MCF 10A (cell line): ENCODE measurements at regions of chr1 and their contacts with region 1.

Region 1: DNA sequence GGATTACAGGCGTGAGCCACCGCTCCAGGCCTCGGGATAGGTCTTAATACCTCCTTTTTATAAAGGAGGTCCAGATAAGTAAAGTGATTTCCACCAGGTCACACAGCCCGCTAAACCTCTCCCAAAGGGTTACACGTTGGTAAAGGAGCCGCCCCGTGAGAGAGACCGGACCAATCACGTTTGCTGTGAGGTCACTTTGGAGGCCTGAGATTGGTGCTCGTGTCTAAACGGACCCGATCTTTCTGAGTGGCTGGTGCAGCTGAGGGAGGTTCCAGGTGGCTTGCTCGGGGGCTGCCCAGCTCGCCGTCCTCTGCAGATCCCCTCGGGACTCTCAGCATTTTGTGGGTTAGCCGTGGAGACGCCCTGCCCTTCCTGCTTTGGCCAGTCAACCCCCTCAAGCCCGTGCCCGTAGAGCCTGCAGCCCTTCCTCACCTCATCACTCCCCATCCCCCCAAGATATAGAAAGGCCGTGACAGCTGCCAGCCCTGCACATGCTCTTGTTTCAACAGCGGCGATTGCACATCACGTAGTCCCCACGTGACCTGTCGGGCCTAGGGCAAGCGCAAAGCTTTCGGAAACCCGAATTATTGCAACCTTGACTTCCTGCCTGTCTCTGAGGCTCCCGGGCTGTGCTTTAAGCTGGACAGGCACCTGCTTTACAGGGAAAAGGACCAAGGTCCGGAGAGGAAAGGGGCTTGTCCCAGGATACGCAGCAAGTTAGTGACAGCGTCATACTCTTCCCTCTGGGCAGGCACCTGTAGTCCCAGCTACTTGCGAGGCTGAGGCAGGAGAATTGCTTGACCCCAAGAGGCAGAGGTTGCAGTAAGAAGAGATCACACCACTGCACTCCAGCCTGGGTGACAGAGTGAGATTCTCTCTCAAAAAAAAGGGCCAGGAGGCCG is 5.0 kb upstream of the COA7 start:
- DNase-seq: peak; percentile 97
- H3K4me3 Mint-ChIP-seq: peak overlapping the region; percentile 89
- H3K27ac Mint-ChIP-seq: peak overlapping the region; percentile 93
- H3K4me1 Mint-ChIP-seq: peaks cover 26% of the 10 kb centered on the region
- H3K27me3 Mint-ChIP-seq: no peaks in the 10 kb centered on the region
- CTCF ChIP-seq: no peak

Region 2: DNA sequence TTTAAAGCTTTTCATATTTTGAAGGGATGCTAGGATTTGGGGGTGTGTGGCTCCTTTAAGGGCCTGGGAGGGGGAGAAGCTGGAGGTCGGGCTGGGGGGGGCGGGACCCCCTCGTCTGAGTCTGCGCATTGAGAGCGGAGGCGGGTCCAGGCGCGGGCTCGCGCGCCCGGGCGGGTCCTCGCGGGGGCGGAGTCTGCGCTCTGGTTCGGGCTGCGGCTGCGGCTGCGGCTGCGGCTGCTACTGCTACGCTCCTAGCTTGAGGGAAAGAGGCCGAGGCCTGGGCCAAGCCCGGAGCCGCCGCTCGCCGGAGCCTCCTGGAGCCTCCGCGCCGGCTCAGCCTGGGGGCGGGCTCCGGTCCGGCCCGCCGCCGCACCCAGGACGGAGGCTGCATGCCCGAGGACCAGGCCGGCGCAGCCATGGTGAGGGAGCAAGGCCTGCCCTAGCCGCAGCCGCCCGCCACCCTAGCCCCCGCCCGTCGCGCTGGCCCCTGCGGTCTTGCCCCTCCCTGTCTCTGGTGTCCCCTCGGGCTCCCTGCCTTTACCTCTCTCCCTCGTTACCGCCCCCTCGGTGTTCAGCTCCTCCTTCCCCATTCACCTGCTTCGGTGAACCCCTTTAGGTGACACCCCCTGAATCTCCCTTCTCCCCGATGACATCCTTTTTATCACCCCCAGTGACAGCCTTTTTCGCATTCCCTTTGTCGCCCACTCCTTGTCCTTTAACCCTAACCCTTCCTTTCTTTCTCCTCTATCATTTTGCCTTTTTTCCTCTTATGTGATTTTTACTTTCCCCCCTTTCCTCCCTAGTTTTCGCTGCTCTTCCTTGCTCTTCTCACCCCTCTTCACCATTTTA is 23.4 kb after region 1 on chr1 and contains the start of gene ZYG11B:
- CTCF ChIA-PET with region 1: interaction called, 7 read pairs
- POLR2A ChIA-PET with region 1: interaction called, 22 read pairs
- intact Hi-C with region 1: no loop called
- DNase-seq: peak; percentile 81
- H3K4me3 Mint-ChIP-seq: peak within 1 kb of the TSS; percentile 97
- H3K27ac Mint-ChIP-seq: peak within 1 kb of the TSS; percentile 96
- H3K4me1 Mint-ChIP-seq: peaks cover 25% of the 10 kb centered on the region
- H3K27me3 Mint-ChIP-seq: no peaks in the 10 kb centered on the region
- CTCF ChIP-seq: no peak
- total RNA-seq, gene ZYG11B: 16.2 and 18.6 TPM in 2 replicates

Region 3: GRCh38 chr1:52748119-52748518 is 45.0 kb after region 1 on chr1:
- CTCF ChIA-PET with region 1: interaction called, 11 read pairs
- POLR2A ChIA-PET with region 1: interaction called, 6 read pairs
- intact Hi-C with region 1: loop called (anchors 1 kb)
- DNase-seq: peak; percentile 6
- H3K4me3 Mint-ChIP-seq: no peak overlapping the region
- H3K27ac Mint-ChIP-seq: no peak overlapping the region
- H3K4me1 Mint-ChIP-seq: peaks cover 17% of the 10 kb centered on the region
- H3K27me3 Mint-ChIP-seq: no peaks in the 10 kb centered on the region
- CTCF ChIP-seq: peak; percentile 26

Region 4: DNA sequence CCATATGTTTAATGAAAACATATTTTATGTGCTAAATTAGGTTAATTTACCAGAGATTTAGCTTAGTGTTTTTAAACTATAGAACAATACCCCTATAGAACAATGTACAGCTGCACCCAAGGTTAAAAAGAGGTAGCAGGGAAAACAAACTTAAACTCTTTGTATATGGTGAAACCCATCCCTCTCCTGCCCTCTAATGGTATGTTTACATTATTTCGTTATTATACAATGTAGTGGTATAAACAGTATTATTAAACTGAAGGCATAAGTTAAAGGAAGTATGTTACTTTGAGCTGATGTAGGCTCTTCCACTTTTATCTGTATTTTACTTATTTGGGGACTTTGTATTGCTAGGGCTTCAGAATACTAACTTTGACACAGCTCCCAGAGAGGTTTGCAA is 122.7 kb after region 1 on chr1:
- CTCF ChIA-PET with region 1: interaction called, 6 read pairs
- POLR2A ChIA-PET with region 1: interaction called, 3 read pairs
- intact Hi-C with region 1: loop called (anchors 1 kb)
- DNase-seq: peak; percentile 31
- H3K4me3 Mint-ChIP-seq: no peak overlapping the region
- H3K27ac Mint-ChIP-seq: no peak overlapping the region
- H3K4me1 Mint-ChIP-seq: no peaks in the 10 kb centered on the region
- H3K27me3 Mint-ChIP-seq: no peaks in the 10 kb centered on the region
- CTCF ChIP-seq: peak; percentile 12

Region 5: GRCh38 chr1:52920791-52921291 is 217.7 kb after region 1 on chr1:
- CTCF ChIA-PET with region 1: interaction called, 6 read pairs
- POLR2A ChIA-PET with region 1: interaction called, 8 read pairs
- intact Hi-C with region 1: loop called (anchors 1 kb)
- DNase-seq: peak; percentile 33
- H3K4me3 Mint-ChIP-seq: peak overlapping the region; percentile 83
- H3K27ac Mint-ChIP-seq: peak overlapping the region; percentile 17
- H3K4me1 Mint-ChIP-seq: peaks cover 17% of the 10 kb centered on the region
- H3K27me3 Mint-ChIP-seq: no peaks in the 10 kb centered on the region
- CTCF ChIP-seq: no peak

Region 6: GRCh38 chr1:53182111-53182593 is 479.0 kb after region 1 on chr1:
- CTCF ChIA-PET with region 1: interaction called, 7 read pairs
- POLR2A ChIA-PET with region 1: no interaction called
- intact Hi-C with region 1: loop called (anchors 1 kb)
- DNase-seq: peak; percentile 84
- H3K4me3 Mint-ChIP-seq: no peak overlapping the region
- H3K27ac Mint-ChIP-seq: no peak overlapping the region
- H3K4me1 Mint-ChIP-seq: no peaks in the 10 kb centered on the region
- H3K27me3 Mint-ChIP-seq: no peaks in the 10 kb centered on the region
- CTCF ChIP-seq: peak; percentile 66